ENCODE measurements at regions of chrX and their contacts with region 1.

Region 1: GRCh38 chrX:106692425-106693065 is 34.0 kb upstream of the RNF128 start:
- DNase-seq: peak; percentile 74 to 85
- H3K4me3 ChIP-seq: peak overlapping the region; percentile 2; the same call in 1 of the 2 replicates
- H3K4me3 Mint-ChIP-seq: peak overlapping the region; percentile 76
- H3K27ac Mint-ChIP-seq: peak overlapping the region; percentile 92
- H3K4me1 ChIP-seq: peaks cover 5% of the 10 kb centered on the region; the same call in 1 of the 2 replicates
- H3K4me1 Mint-ChIP-seq: peaks cover 15% of the 10 kb centered on the region
- H3K27me3 ChIP-seq: no peaks in the 10 kb centered on the region
- H3K27me3 Mint-ChIP-seq: no peaks in the 10 kb centered on the region
- CTCF ChIP-seq: peak in 1 of 2 experiments; percentile 14

Region 2: DNA sequence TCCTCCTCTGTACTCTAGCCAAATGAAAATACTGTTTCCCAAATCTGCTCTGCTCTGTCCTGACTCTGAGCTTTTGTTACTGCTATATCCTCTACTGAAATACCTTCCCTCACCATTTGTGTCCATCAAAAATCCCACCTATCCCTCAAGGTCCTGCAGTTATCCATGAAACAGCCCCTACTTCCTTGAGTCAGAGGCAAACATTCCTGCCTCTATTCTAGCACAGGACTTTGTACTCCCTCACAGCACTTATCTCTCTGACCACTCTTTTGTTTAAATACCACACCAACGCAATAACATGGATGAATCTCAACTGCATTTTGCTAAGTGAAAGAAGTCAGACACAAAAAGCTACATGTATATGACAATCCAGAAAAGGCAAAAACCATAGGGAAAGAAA is 23.5 kb after region 1 on chrX:
- CTCF ChIA-PET with region 1: no interaction called
- POLR2A ChIA-PET with region 1: interaction called, 4 read pairs
- intact Hi-C with region 1: loop called (anchors 1 kb)
- DNase-seq: peak; percentile 43 to 45
- H3K4me3 ChIP-seq: no peak overlapping the region
- H3K4me3 Mint-ChIP-seq: peak overlapping the region; percentile 60
- H3K27ac Mint-ChIP-seq: peak overlapping the region; percentile 90
- H3K4me1 ChIP-seq: peaks cover 37% of the 10 kb centered on the region
- H3K4me1 Mint-ChIP-seq: peaks cover 20% of the 10 kb centered on the region
- H3K27me3 ChIP-seq: no peaks in the 10 kb centered on the region
- H3K27me3 Mint-ChIP-seq: no peaks in the 10 kb centered on the region
- CTCF ChIP-seq: no peak

Region 3: DNA sequence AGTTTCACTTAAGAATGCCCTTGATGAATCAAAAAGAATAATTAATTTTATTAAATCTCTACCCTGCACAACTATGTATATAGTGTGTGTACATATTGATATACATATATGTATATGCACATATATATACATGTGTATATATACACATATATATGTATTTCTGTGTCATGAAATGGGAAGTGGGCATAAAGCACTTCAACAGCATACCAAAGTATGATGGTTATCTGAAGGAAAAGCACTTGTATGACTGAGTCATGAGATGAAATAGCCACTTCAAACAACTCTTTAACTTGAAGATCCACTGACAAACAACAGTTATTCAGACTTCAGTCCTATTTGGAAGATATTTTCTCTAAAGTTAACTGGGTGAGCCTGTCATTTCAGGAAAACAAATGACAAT is 50.3 kb after region 1 on chrX:
- CTCF ChIA-PET with region 1: interaction called, 6 read pairs
- POLR2A ChIA-PET with region 1: no interaction called
- intact Hi-C with region 1: loop called (anchors 1 kb)
- DNase-seq: no peak
- H3K4me3 ChIP-seq: no peak overlapping the region
- H3K4me3 Mint-ChIP-seq: no peak overlapping the region
- H3K27ac Mint-ChIP-seq: no peak overlapping the region
- H3K4me1 ChIP-seq: peaks cover 19% of the 10 kb centered on the region
- H3K4me1 Mint-ChIP-seq: no peaks in the 10 kb centered on the region
- H3K27me3 ChIP-seq: no peaks in the 10 kb centered on the region
- H3K27me3 Mint-ChIP-seq: no peaks in the 10 kb centered on the region
- CTCF ChIP-seq: no peak

Region 4: GRCh38 chrX:106791495-106791894 is 99.0 kb after region 1 on chrX:
- CTCF ChIA-PET with region 1: no interaction called
- POLR2A ChIA-PET with region 1: no interaction called
- intact Hi-C with region 1: loop called (anchors 1 kb)
- DNase-seq: no peak
- H3K4me3 ChIP-seq: no peak overlapping the region
- H3K4me3 Mint-ChIP-seq: no peak overlapping the region
- H3K27ac Mint-ChIP-seq: no peak overlapping the region
- H3K4me1 ChIP-seq: no peaks in the 10 kb centered on the region
- H3K4me1 Mint-ChIP-seq: no peaks in the 10 kb centered on the region
- H3K27me3 ChIP-seq: no peaks in the 10 kb centered on the region
- H3K27me3 Mint-ChIP-seq: no peaks in the 10 kb centered on the region
- CTCF ChIP-seq: peak in 1 of 2 experiments; percentile 31

Measured in Caco-2 (cell line).